GM12878 (cell line): ENCODE measurements at regions of chr22 and their contacts with region 1.

Region 1: DNA sequence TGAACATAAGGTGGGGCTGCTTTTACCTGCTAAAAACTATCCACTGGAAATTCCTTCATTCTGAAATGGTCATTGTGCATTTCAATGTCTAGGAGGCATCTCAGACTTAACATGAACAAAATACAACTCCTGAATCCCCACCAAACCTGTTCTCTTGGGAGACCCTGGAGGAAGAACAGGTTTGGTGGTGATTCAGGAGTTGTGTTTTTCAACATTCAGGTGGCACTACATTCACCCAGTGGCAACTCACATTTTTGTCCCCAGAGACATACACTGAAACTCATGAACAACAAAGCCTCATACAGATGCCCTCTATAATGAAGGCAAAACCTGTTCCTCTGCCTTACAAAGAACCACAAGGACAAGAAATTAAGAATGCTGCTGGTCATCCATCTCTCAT is 64.4 kb upstream of the CYP2D6 start:
- DNase-seq: no peak
- ATAC-seq: peak; percentile 34; the same call in 2 of the 3 replicates
- H3K4me3 ChIP-seq: no peak overlapping the region
- H3K27ac ChIP-seq: no peak overlapping the region
- H3K4me1 ChIP-seq: peaks cover 3% of the 10 kb centered on the region; the same call in 1 of the 2 replicates
- H3K27me3 ChIP-seq: no peaks in the 10 kb centered on the region
- CTCF ChIP-seq: no peak
- EP300 ChIP-seq: no peak
- POLR2A ChIP-seq: no peak
- RAD21 ChIP-seq: no peak

Region 2: DNA sequence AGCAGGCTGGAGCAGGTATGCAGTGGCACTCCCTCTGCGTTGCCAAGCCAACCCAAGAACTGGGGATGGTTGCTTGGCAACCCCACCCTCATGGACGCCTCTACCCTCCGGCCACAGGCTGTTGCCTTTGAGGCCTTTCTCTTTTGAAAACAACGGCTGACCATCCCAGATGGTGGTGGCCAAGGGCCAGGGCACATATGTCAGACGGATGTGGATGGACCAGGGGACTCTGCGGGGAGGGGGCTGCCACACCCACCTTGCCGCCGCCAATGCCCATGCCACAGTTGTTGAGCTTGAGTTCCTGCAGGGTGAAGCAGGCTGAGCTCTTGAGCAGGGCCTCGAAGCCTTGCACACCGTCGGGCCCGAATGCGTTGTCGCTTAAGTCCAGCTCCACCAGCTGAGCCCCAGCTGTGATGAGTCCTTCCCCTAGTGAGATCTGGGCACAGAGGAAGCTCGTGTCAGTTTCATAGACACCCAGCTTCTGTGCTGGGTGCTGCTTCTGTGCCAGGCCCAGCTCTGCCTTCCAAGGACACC is 930.5 kb before region 1 on chr22:
- CTCF ChIA-PET with region 1: no interaction called
- POLR2A ChIA-PET with region 1: no interaction called
- RAD21 ChIA-PET with region 1: no interaction called
- SMC1A ChIA-PET with region 1: no interaction called
- in situ Hi-C with region 1: no loop called
- intact Hi-C with region 1: no loop called
- DNase-seq: no peak
- ATAC-seq: no peak
- H3K4me3 ChIP-seq: no peak overlapping the region
- H3K27ac ChIP-seq: no peak overlapping the region
- H3K4me1 ChIP-seq: no peaks in the 10 kb centered on the region
- H3K27me3 ChIP-seq: no peaks in the 10 kb centered on the region
- CTCF ChIP-seq: no peak
- EP300 ChIP-seq: no peak
- POLR2A ChIP-seq: no peak
- RAD21 ChIP-seq: no peak

Region 3: GRCh38 chr22:42033263-42034181 is 161.4 kb before region 1 on chr22:
- CTCF ChIA-PET with region 1: no interaction called
- POLR2A ChIA-PET with region 1: no interaction called
- RAD21 ChIA-PET with region 1: no interaction called
- SMC1A ChIA-PET with region 1: no interaction called
- in situ Hi-C with region 1: no loop called
- intact Hi-C with region 1: no loop called
- DNase-seq: no peak
- ATAC-seq: no peak
- H3K4me3 ChIP-seq: no peak overlapping the region
- H3K27ac ChIP-seq: no peak overlapping the region
- H3K4me1 ChIP-seq: peaks cover 22% of the 10 kb centered on the region
- H3K27me3 ChIP-seq: no peaks in the 10 kb centered on the region
- CTCF ChIP-seq: no peak
- EP300 ChIP-seq: no peak
- POLR2A ChIP-seq: no peak
- RAD21 ChIP-seq: no peak

Region 4: DNA sequence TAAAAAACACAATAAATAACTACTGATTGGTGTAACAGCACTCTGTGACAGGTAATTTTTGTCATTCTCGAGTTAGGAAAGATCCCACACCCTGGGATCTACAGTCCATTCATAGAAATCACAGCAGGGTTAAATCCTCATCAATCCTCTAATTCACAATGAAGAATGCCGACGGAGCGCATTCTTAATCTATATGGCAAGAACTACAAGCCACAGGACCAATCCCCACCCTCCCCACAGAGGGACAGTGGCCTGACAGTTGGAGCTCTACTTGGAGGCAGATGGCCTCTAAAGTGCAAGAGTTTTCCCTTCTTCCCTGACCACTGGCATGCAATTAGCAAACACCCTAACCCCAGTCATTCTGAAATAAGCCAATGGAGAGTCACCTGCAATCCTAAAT is 41.3 kb after region 1 on chr22:
- CTCF ChIA-PET with region 1: no interaction called
- POLR2A ChIA-PET with region 1: interaction called, 3 read pairs
- RAD21 ChIA-PET with region 1: no interaction called
- SMC1A ChIA-PET with region 1: no interaction called
- in situ Hi-C with region 1: no loop called
- intact Hi-C with region 1: loop called (anchors 2 kb)
- DNase-seq: no peak
- ATAC-seq: no peak
- H3K4me3 ChIP-seq: no peak overlapping the region
- H3K27ac ChIP-seq: no peak overlapping the region
- H3K4me1 ChIP-seq: no peaks in the 10 kb centered on the region
- H3K27me3 ChIP-seq: no peaks in the 10 kb centered on the region
- CTCF ChIP-seq: no peak
- EP300 ChIP-seq: no peak
- POLR2A ChIP-seq: no peak
- RAD21 ChIP-seq: no peak